ENCODE measurements at regions of chr20 and their contacts with region 1.

Region 1: DNA sequence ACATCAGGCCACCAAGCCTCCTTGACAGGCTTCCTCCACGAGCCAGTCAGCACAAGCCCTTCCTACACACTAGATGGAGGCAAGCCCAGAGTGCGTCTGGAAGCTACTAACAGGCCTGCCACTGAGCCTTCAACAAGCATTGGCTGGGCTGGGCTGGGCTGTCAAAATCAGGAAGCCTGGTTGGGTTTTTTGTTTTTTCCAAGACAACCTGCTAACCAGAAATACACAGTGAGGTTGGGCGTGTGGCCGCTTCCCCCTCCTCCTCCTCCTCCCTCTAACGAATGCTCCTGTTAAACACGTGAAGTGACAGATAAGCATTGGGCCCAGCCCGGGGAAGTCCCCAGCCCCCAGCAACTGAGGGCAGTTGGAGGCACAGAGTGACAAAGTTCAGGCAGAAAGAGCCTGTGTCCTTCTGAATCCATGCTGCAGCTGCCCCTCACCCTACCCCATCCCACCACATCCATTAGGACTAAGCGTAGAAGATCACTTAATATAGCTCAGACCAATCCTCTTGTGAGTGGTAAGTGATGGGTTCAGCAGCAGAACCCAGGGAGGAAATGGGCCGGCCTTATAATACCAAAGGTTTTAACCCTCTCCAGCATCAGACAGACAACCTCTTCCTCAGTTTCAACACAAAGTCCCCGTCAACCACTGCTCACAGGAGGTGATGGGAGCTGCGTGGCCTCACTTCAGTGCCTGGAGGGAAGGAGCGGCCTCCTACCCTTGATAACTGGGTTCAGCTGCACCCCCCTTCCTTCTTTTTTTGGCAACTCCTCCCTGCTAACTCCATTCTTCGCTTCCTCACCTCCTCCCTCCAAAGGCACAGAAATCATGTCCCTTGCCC is 1.1 kb downstream of the NFATC2 start:
- DNase-seq: peak; percentile 46 to 89 (median 81)
- ATAC-seq: peak; percentile 87
- H3K4me3 ChIP-seq: peak overlapping the region; percentile 68
- H3K4me3 Mint-ChIP-seq: peak overlapping the region; percentile 93 to 100 (median 98)
- H3K27ac ChIP-seq: peak overlapping the region; percentile 96
- H3K27ac Mint-ChIP-seq: peak overlapping the region; percentile 88 to 100 (median 97)
- H3K4me1 ChIP-seq: peaks cover 46 to 48% of the 10 kb centered on the region in 2 donors
- H3K4me1 Mint-ChIP-seq: peaks cover 38 to 62% (median 56%) of the 10 kb centered on the region in 7 donors
- H3K27me3 ChIP-seq: no peaks in the 10 kb centered on the region
- H3K27me3 Mint-ChIP-seq: peaks cover 0 to 22% (median 0%) of the 10 kb centered on the region in 5 donors

Region 2: DNA sequence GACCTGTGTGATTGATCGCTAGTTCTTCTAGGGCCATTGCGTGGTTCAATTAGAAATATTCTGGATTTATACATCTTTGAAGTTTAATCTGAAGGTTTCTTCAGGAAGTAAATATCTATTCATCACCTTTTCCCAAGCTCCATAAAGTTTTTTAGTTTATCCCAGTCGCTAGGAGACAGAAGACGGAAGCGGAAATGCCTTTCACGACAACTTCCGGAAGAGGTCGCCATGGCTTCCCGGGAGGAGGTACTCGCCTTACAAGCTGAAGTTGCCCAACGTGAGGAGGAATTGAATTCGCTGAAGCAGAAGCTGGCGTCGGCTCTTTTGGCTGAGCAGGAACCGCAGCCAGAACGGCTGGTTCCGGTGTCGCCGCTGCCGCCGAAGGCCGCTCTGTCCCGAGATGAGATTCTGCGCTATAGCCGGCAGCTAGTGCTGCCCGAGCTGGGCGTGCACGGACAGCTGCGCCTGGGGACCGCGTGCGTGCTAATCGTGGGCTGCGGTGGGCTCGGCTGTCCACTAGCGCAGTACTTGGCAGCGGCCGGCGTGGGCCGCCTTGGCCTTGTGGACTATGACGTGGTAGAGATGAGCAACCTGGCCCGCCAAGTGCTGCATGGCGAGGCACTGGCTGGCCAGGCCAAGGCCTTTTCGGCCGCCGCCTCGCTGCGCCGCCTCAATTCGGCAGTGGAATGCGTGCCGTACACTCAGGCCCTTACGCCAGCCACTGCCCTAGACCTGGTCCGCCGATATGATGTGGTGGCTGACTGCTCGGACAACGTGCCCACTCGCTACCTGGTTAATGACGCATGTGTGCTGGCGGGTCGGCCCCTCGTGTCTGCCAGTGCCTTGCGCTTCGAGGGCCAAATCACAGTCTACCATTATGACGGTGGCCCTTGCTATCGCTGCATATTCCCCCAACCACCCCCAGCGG is 582.5 kb before region 1 on chr20 and contains the start of gene MOCS3:
- CTCF ChIA-PET with region 1: no interaction called
- POLR2A ChIA-PET with region 1: no interaction called
- intact Hi-C with region 1: loop called (anchors 1 kb)
- DNase-seq: peak; percentile 57 to 95 (median 91)
- ATAC-seq: peak; percentile 86
- H3K4me3 ChIP-seq: peak within 1 kb of the TSS; percentile 93
- H3K4me3 Mint-ChIP-seq: peak within 1 kb of the TSS; percentile 92 to 99 (median 98)
- H3K27ac ChIP-seq: peak within 1 kb of the TSS; percentile 93
- H3K27ac Mint-ChIP-seq: peak within 1 kb of the TSS; percentile 97 to 100 (median 100)
- H3K4me1 ChIP-seq: peaks cover 22 to 25% of the 10 kb centered on the region in 2 donors
- H3K4me1 Mint-ChIP-seq: peaks cover 25 to 78% (median 66%) of the 10 kb centered on the region in 7 donors
- H3K27me3 ChIP-seq: no peaks in the 10 kb centered on the region
- H3K27me3 Mint-ChIP-seq: peaks cover 0 to 2% (median 0%) of the 10 kb centered on the region in 5 donors
- total RNA-seq, gene MOCS3: 2.5 to 8.9 (median 5.2) TPM

Region 3: DNA sequence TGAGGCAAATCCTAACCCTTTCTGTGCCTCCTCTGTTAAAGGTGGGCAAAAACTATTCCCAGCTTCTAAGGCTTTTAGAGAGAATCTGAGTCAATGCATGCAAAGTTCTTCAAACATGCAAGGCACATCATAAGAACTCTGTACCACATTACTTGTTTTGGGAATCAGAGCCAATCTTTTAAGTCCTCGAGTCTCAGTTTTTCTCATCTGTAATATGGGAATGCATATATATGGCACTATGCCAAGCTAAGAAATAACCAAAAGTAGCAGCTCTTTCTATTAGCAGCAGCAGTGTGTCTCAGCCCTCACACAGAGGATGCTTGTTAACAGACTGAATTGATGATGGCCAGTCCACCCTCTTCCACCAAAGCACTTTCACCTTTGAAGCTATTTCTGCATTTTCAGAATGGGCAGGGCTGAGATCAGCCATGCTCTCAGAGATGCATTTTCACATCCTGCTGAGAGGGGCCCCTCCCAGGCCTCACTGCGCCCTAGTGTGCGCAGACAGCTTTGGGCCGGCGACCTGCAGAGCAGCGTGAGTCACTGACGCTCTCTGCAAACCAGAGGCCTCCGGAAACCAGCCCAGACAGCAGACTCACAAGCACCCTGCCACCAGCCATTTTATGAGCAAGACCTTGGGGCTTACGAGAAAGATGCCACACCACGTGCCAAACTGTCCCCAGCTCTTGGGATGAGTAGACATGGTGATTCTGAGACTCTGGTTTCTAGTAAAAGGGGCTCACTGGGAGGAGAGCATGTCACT is 136.9 kb before region 1 on chr20:
- CTCF ChIA-PET with region 1: no interaction called
- POLR2A ChIA-PET with region 1: interaction called, 4 read pairs
- intact Hi-C with region 1: loop called (anchors 1 kb)
- DNase-seq: peak; percentile 21 to 78 (median 36)
- ATAC-seq: peak; percentile 89
- H3K4me3 ChIP-seq: no peak overlapping the region
- H3K4me3 Mint-ChIP-seq: peak overlapping the region in 5 of 10 donors; percentile 3 to 74 (median 21)
- H3K27ac ChIP-seq: peak overlapping the region; percentile 62
- H3K27ac Mint-ChIP-seq: peak overlapping the region; percentile 82 to 100 (median 97)
- H3K4me1 ChIP-seq: peaks cover 48 to 95% of the 10 kb centered on the region in 2 donors
- H3K4me1 Mint-ChIP-seq: peaks cover 42 to 89% (median 62%) of the 10 kb centered on the region in 7 donors
- H3K27me3 ChIP-seq: no peaks in the 10 kb centered on the region
- H3K27me3 Mint-ChIP-seq: no peaks in the 10 kb centered on the region

Region 4: DNA sequence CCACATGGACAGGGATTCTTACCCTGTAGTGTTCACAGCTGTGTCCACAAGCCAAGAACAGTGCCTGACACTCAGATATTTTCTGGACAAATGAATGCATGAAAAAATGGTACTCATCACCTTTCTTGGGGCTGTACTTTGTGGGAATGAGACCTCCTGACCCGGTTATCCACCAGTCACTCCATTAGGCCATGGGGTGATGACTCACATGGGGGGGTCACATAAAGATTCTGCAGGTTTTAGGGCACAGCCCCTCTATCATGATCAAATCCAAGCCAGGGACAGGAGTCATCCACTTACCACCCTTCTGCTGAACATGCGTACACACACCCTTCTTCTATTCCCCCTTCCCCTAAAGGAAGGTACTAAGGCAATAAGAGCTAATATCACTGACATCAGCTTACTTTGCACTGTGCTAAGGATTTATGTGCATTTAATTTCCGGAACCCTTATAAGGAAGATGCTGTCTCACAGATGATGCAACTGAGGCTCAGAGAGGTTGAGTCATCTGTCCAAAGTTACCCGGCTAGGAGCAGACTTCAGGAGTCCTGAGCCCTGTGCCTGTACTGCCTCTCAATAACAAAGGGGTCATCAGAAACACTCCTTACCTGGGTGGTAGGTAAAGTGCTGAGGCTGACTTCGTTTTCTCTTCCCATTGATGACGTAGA is 106.7 kb before region 1 on chr20:
- CTCF ChIA-PET with region 1: no interaction called
- POLR2A ChIA-PET with region 1: no interaction called
- intact Hi-C with region 1: no loop called
- DNase-seq: no peak
- ATAC-seq: peak; percentile 59
- H3K4me3 ChIP-seq: no peak overlapping the region
- H3K4me3 Mint-ChIP-seq: no peak overlapping the region
- H3K27ac ChIP-seq: no peak overlapping the region
- H3K27ac Mint-ChIP-seq: peak overlapping the region in 1 of 9 donors; percentile 28
- H3K4me1 ChIP-seq: peaks cover 7 to 42% of the 10 kb centered on the region in 2 donors
- H3K4me1 Mint-ChIP-seq: peaks cover 24 to 52% (median 31%) of the 10 kb centered on the region in 7 donors
- H3K27me3 ChIP-seq: no peaks in the 10 kb centered on the region
- H3K27me3 Mint-ChIP-seq: no peaks in the 10 kb centered on the region

Region 5: DNA sequence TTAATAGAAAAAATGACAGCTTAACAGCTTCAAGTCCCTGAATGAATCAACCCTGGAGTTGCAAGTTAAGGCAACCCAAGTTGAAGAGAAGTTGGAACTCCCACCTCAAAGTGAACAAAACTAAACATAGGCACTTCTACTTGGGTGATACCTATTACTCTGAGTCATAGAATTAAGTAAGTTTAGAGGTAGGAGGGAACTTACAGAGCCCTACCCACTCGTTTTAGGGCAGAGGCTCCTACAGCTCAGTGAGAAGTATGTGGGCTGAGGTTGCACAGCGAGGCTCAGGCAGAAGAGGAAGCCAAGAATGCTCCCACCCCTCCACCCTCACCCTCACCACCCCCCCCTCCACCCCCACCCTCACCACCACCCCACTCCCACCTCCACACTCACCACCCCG is 41.1 kb before region 1 on chr20:
- CTCF ChIA-PET with region 1: interaction called, 5 read pairs
- POLR2A ChIA-PET with region 1: interaction called, 14 read pairs
- intact Hi-C with region 1: loop called (anchors 1 kb)
- DNase-seq: peak in 8 of 9 donors; percentile 38 to 74 (median 54)
- ATAC-seq: peak; percentile 89
- H3K4me3 ChIP-seq: no peak overlapping the region
- H3K4me3 Mint-ChIP-seq: peak overlapping the region; percentile 21 to 99 (median 54)
- H3K27ac ChIP-seq: peak overlapping the region; percentile 58
- H3K27ac Mint-ChIP-seq: peak overlapping the region; percentile 65 to 100 (median 95)
- H3K4me1 ChIP-seq: peaks cover 59 to 60% of the 10 kb centered on the region in 2 donors
- H3K4me1 Mint-ChIP-seq: peaks cover 63 to 93% (median 87%) of the 10 kb centered on the region in 7 donors
- H3K27me3 ChIP-seq: no peaks in the 10 kb centered on the region
- H3K27me3 Mint-ChIP-seq: no peaks in the 10 kb centered on the region

Region 6: GRCh38 chr20:51525241-51526129 is 15.9 kb before region 1 on chr20:
- CTCF ChIA-PET with region 1: no interaction called
- POLR2A ChIA-PET with region 1: interaction called, 10 read pairs
- intact Hi-C with region 1: loop called (anchors 1 to 2 kb)
- DNase-seq: peak in 2 of 9 donors; percentile 29 to 49
- ATAC-seq: peak; percentile 71
- H3K4me3 ChIP-seq: peak overlapping the region; percentile 33
- H3K4me3 Mint-ChIP-seq: peak overlapping the region; percentile 70 to 86 (median 79)
- H3K27ac ChIP-seq: peak overlapping the region; percentile 46
- H3K27ac Mint-ChIP-seq: peak overlapping the region; percentile 66 to 90 (median 87)
- H3K4me1 ChIP-seq: peaks cover 32 to 59% of the 10 kb centered on the region in 2 donors
- H3K4me1 Mint-ChIP-seq: peaks cover 62 to 81% (median 78%) of the 10 kb centered on the region in 7 donors
- H3K27me3 ChIP-seq: no peaks in the 10 kb centered on the region
- H3K27me3 Mint-ChIP-seq: no peaks in the 10 kb centered on the region

Region 7: DNA sequence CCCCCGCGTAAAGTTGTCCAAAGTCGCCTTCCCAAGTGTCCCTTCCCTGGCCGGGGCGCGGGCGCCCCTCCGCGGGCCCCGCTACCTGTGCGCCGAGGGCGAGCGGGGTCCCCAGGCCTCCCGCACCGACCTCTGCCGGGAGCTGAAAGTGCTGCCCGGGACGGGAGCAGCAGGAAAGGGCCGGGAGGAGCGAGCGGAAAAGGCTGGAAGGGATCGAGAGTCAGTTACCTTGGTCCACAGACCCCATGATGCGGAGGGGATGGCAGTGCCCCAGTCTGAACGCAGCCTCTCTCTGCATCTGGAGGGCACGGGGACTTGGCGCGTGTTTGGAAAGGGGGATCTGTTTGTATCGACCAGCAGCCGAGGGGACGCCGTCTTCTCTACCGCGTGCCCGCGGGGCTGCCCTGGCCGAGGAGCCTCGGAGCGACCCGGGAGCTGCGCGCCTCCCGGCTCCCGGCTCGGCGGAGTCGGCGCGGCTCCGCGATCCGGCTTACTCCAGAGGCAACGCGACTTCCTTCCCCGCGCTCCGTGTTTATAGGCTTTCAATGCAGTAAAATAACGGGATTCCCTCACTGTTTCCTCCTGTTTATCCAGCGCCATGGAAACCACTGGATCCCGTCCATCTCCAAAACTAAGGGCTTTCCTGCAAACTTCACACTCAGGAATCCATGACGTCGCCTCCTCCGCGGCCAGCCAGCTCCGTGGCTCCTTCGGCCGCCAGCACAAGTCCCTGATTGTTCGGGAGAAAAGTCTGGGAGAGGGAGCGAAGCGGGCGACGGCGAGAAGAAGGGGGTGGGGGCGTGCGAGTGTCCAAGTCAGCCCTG is 21.1 kb after region 1 on chr20:
- CTCF ChIA-PET with region 1: no interaction called
- POLR2A ChIA-PET with region 1: interaction called, 4 read pairs
- intact Hi-C with region 1: loop called in 1 of 2 experiments (anchors 2 kb)
- DNase-seq: peak in 5 of 9 donors; percentile 12 to 32 (median 21)
- ATAC-seq: peak; percentile 32
- H3K4me3 ChIP-seq: peak overlapping the region; percentile 49
- H3K4me3 Mint-ChIP-seq: peak overlapping the region; percentile 66 to 84 (median 74)
- H3K27ac ChIP-seq: no peak overlapping the region
- H3K27ac Mint-ChIP-seq: no peak overlapping the region
- H3K4me1 ChIP-seq: peaks cover 9 to 11% of the 10 kb centered on the region in 2 donors
- H3K4me1 Mint-ChIP-seq: peaks cover 10 to 36% (median 19%) of the 10 kb centered on the region in 7 donors
- H3K27me3 ChIP-seq: peaks cover 16 to 37% of the 10 kb centered on the region in 2 donors
- H3K27me3 Mint-ChIP-seq: peaks cover 38 to 78% (median 53%) of the 10 kb centered on the region in 5 donors

Measured in naive thymus-derived CD4-positive, alpha-beta T cell (primary cell).